ENCODE measurements at regions of chr1 and their contacts with region 1.

Region 1: GRCh38 chr1:58515794-58516401 is 30.6 kb downstream of the OMA1 start:
- DNase-seq: peak; percentile 87
- H3K4me3 ChIP-seq: no peak overlapping the region
- H3K27ac ChIP-seq: no peak overlapping the region
- H3K4me1 ChIP-seq: peaks cover 5% of the 10 kb centered on the region
- H3K27me3 ChIP-seq: no peaks in the 10 kb centered on the region
- CTCF ChIP-seq: peak; percentile 76

Region 2: GRCh38 chr1:58190267-58190988 is 325.5 kb before region 1 on chr1:
- CTCF ChIA-PET with region 1: no interaction called
- POLR2A ChIA-PET with region 1: no interaction called
- intact Hi-C with region 1: no loop called
- DNase-seq: peak; percentile 24
- H3K4me3 ChIP-seq: no peak overlapping the region
- H3K27ac ChIP-seq: no peak overlapping the region
- H3K4me1 ChIP-seq: no peaks in the 10 kb centered on the region
- H3K27me3 ChIP-seq: no peaks in the 10 kb centered on the region
- CTCF ChIP-seq: no peak

Region 3: DNA sequence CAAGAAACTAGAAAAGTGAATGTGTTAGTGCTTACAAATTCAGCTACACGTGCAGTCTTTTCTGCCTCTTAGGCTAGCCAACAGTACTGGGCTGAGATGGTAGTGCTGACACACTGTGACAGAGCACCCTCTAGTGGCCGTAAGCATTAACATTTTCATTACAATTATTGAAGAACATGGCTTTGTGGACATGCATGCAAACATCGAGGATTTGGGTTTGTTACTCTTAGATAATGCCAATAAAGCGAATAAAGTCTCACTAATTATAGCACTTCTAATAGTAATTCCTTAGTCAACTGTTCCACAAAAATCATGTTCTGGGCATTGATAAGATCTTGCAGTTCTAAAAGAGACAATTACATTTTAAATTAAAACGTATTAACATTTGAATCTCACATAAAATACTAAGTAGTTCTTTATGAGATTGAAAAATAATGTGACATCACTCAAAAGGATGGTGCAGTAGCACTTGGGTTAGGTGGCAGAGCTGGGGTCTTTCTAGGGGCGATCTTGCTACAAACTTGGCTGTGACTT is 136.8 kb after region 1 on chr1:
- CTCF ChIA-PET with region 1: interaction called, 8 read pairs
- POLR2A ChIA-PET with region 1: no interaction called
- intact Hi-C with region 1: loop called (anchors 5 kb)
- DNase-seq: peak; percentile 87
- H3K4me3 ChIP-seq: no peak overlapping the region
- H3K27ac ChIP-seq: no peak overlapping the region
- H3K4me1 ChIP-seq: peaks cover 4% of the 10 kb centered on the region
- H3K27me3 ChIP-seq: no peaks in the 10 kb centered on the region
- CTCF ChIP-seq: peak; percentile 86